HEK293 (cell line): ENCODE measurements at regions of chr2 and their contacts with region 1.

Region 1: DNA sequence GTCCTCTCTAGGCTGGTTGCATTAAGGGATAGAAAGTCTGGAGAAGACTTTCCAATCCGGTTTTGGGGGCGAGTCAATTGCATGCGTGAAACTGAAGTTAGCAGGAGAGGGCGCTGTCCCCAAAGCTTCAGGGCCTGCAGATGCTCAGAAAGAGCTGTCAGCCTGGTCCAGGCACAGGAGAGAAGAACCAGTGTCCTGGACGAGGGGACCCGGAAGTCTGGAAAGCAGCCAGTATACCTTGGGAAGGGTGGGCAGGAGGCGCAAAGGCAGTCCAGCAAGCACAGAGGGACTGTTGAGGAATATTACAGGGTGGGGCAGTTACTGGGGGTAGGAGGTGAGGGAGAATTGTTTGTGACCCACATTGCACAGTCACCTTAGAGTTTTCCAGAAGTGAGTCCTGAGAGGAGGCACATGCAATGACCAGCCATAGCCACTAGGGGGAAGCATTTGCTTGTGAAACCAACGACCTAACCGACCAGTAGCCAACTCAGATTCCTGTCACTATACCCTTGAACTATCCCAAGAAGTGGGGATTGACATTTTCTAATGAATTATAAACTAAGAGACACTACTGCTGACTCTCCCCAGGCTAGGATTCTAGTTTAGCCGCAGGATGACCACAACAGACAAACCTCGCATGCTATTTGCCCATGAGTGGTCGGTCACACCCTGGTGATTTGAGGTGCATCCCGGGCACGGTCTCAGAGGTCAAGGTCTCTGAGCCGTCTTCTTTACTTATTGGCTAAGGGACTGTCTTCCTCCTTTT is 172.8 kb downstream of the RDH14 start:
- H3K4me3 ChIP-seq: no peak overlapping the region
- H3K27ac ChIP-seq: no peak overlapping the region
- H3K4me1 ChIP-seq: no peaks in the 10 kb centered on the region
- CTCF ChIP-seq: peak; percentile 78

Region 2: GRCh38 chr2:18413676-18414396 is 26.2 kb after region 1 on chr2:
- CTCF ChIA-PET with region 1: interaction called, 65 read pairs
- POLR2A ChIA-PET with region 1: no interaction called
- H3K4me3 ChIP-seq: no peak overlapping the region
- H3K27ac ChIP-seq: no peak overlapping the region
- H3K4me1 ChIP-seq: no peaks in the 10 kb centered on the region
- CTCF ChIP-seq: no peak

Region 3: GRCh38 chr2:18536100-18536499 is 148.5 kb after region 1 on chr2:
- CTCF ChIA-PET with region 1: no interaction called
- POLR2A ChIA-PET with region 1: no interaction called
- H3K4me3 ChIP-seq: no peak overlapping the region
- H3K27ac ChIP-seq: no peak overlapping the region
- H3K4me1 ChIP-seq: no peaks in the 10 kb centered on the region
- CTCF ChIP-seq: no peak